Colonic mucosa (tissue), 4 donors: ENCODE measurements at regions of chr3 and their contacts with region 1.

Region 1: GRCh38 chr3:170414202-170414663 is 4.4 kb upstream of the CLDN11 start:
- DNase-seq: no peak
- H3K4me3 ChIP-seq: no peak overlapping the region
- H3K27ac ChIP-seq: no peak overlapping the region
- H3K4me1 ChIP-seq: no peaks in the 10 kb centered on the region
- H3K27me3 ChIP-seq: peaks cover 15% of the 10 kb centered on the region
- CTCF ChIP-seq: peak; percentile 90

Region 2: GRCh38 chr3:170307671-170308403 is 106.4 kb before region 1 on chr3:
- intact Hi-C with region 1: loop called (anchors 2 kb)
- DNase-seq: no peak
- H3K4me3 ChIP-seq: no peak overlapping the region
- H3K27ac ChIP-seq: no peak overlapping the region
- H3K4me1 ChIP-seq: no peaks in the 10 kb centered on the region
- H3K27me3 ChIP-seq: no peaks in the 10 kb centered on the region
- CTCF ChIP-seq: no peak

Region 3: DNA sequence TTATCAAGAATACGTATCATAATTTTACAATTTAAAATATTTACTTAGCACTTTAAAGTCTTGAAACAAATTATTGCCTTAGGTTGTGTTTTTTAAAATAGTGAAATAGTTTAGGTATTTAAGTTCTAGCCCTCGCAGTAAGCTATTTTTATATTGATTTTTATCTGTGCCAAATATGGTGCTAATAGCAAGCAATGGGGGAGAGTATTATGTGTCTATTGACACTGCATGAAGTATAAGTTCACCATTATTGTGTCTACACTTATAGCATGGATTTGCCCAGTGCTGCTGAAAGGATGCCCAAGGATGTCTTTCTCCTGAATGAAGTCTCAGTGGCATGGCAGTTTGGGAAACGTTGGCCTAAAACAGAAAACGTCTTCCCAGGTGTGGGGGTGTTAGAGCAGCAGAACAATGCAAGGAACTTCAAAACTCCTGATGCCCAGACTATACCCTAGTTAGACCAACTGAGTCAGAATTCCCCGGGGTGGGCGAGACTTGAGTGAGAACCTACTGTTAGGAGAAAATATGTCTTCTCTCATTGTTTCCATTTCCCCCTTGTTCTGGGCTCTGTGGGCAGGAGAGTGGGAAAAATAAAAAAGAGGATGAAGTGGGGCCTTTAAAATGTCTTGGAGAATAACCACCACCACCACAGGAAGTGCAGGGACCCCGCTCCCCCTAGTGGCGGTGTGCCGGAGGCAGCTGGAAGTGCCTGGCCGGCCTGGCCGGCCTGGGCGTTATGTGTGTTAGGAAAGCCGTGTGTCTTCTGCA is 275.8 kb after region 1 on chr3:
- intact Hi-C with region 1: loop called (anchors 5 kb)
- DNase-seq: peak; percentile 72
- H3K4me3 ChIP-seq: no peak overlapping the region
- H3K27ac ChIP-seq: no peak overlapping the region
- H3K4me1 ChIP-seq: no peaks in the 10 kb centered on the region
- H3K27me3 ChIP-seq: no peaks in the 10 kb centered on the region
- CTCF ChIP-seq: peak; percentile 67

Region 4: DNA sequence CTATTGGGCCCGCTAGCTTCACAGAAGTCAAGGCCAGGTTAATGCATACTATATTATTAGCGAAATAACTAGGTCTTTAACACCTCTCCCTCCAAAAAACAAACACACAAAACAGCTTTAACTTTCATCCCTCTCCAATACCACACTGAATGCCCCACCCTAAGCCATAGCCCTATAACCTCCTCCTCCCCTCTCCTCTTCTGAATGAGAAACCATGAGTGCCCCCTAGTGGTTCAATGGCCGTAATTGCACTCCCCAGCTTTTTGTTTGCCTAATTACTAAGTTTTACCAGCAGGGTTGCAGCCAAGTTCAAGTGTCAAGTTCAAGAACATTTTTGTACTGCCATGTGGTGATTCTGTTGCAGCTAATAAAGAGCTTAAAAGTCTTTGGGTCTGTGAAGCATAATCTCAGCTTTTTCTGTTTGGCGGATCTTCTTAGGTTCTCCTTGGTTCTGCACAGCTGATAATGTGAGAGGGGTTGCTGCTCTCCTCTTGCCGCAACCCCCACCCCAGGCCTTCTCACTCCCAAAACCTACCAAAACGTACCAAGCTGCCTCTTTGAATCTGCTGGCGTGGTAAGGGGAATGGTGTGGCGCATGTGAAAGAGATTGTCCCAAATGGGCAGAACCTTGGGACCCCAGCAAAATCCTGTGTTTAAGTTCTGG is 397.8 kb after region 1 on chr3:
- intact Hi-C with region 1: loop called (anchors 2 kb)
- DNase-seq: peak; percentile 82
- H3K4me3 ChIP-seq: no peak overlapping the region
- H3K27ac ChIP-seq: no peak overlapping the region
- H3K4me1 ChIP-seq: no peaks in the 10 kb centered on the region
- H3K27me3 ChIP-seq: no peaks in the 10 kb centered on the region
- CTCF ChIP-seq: peak; percentile 90

Region 5: GRCh38 chr3:170848292-170848917 is 434.2 kb after region 1 on chr3:
- intact Hi-C with region 1: loop called (anchors 10 kb)
- DNase-seq: no peak
- H3K4me3 ChIP-seq: no peak overlapping the region
- H3K27ac ChIP-seq: no peak overlapping the region
- H3K4me1 ChIP-seq: no peaks in the 10 kb centered on the region
- H3K27me3 ChIP-seq: no peaks in the 10 kb centered on the region
- CTCF ChIP-seq: peak; percentile 33

Region 6: DNA sequence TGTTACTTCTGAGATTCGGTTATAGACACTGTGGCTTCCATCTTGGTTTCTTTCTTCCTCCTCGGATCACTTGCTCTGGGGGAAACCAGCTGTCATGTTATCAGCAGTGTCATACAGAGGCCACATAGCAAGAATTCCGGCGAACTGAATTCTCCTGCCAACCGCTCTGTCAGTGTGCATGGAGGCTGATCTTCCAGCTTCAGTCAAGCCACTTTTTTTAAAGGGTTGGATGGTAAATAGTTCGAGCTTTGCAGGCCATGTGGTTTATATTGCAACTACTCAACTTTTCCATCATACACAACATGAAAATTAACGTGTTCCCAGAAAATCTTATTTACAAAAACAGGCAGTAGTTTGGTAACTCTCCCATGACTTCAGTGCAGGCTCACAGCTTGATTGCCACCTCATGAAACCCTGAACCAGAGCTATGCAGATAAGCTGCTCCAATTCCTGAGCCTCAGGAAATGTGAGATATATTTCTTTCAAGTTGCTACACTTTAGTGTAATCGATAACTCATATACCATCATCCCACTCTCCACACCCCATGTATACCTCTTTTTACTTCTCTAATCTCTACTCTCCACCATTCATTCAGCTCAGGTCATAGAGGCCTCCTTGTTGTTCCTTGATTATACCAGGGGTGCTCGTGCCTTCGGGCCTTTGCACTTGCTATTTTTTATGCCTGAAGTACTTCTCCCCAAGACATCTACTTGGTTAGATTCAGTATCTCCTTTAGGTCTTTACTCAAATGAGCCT is 448.6 kb after region 1 on chr3:
- intact Hi-C with region 1: no loop called
- DNase-seq: no peak
- H3K4me3 ChIP-seq: no peak overlapping the region
- H3K27ac ChIP-seq: no peak overlapping the region
- H3K4me1 ChIP-seq: peaks cover 6% of the 10 kb centered on the region
- H3K27me3 ChIP-seq: no peaks in the 10 kb centered on the region
- CTCF ChIP-seq: no peak